Activated B cell treated with CpG ODN at 0.5 μM for 24 hours (primary cell): ENCODE measurements at regions of chrX and their contacts with region 1.

Region 1: DNA sequence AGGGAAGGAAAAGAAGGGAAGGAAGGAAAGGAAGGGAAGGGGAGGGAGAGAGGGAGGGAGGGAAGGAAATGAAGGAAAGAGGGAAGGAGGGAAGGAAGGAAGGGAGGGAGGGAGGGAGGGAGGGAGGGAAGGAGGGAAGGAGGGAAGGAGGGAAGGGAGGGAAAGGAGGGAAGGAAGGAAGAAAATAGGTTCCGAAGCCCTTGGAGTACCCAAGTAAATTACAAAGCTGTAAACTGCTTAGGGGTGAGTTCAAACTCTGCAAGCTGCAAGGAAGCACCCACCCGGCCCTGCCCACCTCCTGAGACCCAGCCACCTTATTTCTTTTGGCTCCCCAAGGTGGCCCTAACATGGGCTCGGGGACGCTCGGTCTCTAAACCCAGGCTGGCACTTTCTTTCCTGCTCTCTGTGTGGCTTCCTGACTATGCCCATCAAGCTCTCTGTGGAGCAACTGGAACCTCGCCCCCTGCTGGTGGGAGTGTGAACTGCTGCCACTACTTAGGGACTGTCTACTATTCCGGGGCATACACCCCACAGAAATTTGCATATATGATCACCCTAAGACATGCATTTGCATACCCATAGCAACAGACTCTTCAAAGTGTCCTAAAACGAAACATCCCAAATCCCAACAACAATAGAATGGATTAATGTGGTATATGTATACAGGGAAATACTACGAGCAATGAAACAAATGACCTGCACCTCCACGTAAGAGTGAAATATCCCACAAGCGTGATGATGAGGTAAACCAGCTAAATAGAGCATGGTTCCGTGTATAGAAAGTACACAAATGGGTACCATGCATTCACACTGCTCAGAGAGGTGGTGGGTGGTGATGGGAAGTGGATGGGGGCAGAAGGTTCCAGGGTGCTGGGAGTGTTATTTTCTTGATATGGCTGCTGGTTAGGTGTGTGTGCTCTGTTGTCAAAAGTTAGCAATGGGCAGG is 151.7 kb upstream of the TBL1X start:
- DNase-seq: peak; percentile 39
- ATAC-seq: peak; percentile 56
- H3K4me3 Mint-ChIP-seq: no peak overlapping the region
- H3K27ac Mint-ChIP-seq: no peak overlapping the region
- H3K4me1 Mint-ChIP-seq: peaks cover 20% of the 10 kb centered on the region
- H3K27me3 Mint-ChIP-seq: no peaks in the 10 kb centered on the region
- CTCF ChIP-seq: peak; percentile 25

Region 2: DNA sequence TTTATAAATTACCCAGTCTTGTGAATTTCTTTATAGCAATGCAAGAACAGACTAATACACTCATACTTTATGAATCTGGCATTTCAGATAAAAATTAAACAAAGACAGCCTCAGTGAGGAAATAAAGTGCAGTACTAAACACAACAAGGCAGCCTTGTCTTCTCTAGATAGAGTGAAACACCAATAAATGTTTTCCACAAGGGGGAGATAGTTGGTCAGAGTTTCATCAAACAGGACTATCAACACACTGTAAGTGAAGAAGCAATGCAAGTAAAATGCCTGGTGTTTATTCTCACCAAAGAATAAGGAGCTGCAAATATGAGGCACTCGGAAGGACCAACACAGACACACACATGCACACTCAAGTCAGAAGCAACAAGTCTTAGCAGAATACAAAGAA is 342.1 kb before region 1 on chrX:
- CTCF ChIA-PET with region 1: interaction called, 4 read pairs
- POLR2A ChIA-PET with region 1: no interaction called
- intact Hi-C with region 1: loop called (anchors 1 kb)
- DNase-seq: no peak
- ATAC-seq: peak; percentile 54
- H3K4me3 Mint-ChIP-seq: no peak overlapping the region
- H3K27ac Mint-ChIP-seq: no peak overlapping the region
- H3K4me1 Mint-ChIP-seq: no peaks in the 10 kb centered on the region
- H3K27me3 Mint-ChIP-seq: peaks cover under 1% of the 10 kb centered on the region
- CTCF ChIP-seq: no peak

Region 3: DNA sequence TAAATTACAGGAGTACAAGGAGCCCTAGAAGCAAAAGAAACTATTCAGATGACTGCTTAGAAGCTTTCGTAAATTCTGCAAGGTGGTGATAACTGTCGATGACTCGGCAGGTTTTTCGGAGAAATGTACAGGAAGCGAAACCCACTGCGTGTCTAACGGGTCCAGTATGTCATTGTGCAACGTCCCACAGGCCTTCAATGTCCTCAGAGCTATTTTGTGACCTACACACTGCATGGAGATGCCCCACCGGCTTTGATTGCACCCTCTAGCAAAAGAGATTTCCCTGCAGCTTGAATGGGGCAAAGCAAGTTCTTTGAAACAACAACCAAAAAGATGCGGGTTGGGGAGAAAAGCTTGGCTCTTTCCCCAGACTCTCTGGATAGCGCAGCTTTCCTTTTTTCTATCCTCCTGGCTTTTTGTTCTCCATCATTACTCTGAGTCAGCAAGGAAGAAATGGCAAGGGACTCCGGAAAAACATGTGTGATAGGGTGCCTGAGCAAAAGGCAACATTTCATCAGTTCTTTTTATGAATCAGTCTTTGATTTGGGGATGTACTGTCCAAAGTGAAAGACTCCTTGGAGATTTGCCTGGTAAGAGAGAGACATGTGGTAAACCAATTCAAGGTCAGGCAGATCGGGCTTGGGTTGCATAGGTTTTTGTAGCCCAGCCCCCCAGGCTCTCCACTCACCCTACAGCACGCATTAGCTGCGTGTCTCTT is 39.7 kb after region 1 on chrX:
- CTCF ChIA-PET with region 1: no interaction called
- POLR2A ChIA-PET with region 1: interaction called, 3 read pairs
- intact Hi-C with region 1: loop called (anchors 1 kb)
- DNase-seq: no peak
- ATAC-seq: peak; percentile 71
- H3K4me3 Mint-ChIP-seq: peak overlapping the region; percentile 70
- H3K27ac Mint-ChIP-seq: peak overlapping the region; percentile 80
- H3K4me1 Mint-ChIP-seq: peaks cover 27% of the 10 kb centered on the region
- H3K27me3 Mint-ChIP-seq: no peaks in the 10 kb centered on the region
- CTCF ChIP-seq: no peak